Posterior vena cava (tissue), 2 donors: ENCODE measurements at regions of chr6 and their contacts with region 1.

Region 1: GRCh38 chr6:159862103-159862502 is 28.7 kb upstream of the MAS1 start:
- DNase-seq: no peak

Region 2: DNA sequence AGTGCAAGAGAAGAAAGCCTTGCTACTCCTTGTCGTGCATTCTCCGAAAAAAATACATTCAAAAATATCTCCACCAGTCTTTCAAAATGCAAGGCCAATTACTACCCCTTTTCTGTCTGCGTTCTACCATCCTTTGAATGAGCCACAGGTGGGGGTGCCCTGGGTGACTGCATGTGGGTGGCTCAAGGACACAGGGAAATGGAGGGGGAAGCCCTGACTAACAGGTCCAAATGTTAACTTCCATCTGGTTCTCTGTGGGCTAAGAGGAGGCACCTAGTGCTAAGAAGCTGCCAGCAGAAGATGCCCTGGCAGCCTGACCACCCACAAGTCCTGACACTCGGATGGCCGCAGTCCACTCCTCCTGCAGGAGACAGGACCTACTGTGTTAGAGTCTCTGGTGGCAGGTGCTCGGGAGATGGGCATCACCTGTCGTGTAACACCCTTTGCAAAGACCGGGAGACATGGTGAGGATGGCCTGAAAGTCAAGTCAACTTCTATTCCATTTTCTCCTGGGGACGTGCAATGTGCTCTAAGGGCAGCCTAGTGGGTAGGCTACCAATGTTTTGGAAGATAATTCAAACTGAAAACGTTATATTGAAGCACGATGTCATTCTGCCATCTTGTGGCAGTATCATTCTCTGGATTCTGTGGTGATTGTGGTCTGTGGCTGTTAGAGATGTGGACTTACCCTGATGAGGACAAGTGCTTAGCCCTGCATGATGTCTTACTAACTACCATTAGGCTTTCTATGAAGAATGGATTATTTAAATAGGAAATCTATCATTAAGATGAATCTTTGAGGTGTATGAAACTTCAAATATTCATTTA is 79.4 kb after region 1 on chr6:
- intact Hi-C with region 1: loop called (anchors 2 to 5 kb)
- DNase-seq: no peak

Region 3: DNA sequence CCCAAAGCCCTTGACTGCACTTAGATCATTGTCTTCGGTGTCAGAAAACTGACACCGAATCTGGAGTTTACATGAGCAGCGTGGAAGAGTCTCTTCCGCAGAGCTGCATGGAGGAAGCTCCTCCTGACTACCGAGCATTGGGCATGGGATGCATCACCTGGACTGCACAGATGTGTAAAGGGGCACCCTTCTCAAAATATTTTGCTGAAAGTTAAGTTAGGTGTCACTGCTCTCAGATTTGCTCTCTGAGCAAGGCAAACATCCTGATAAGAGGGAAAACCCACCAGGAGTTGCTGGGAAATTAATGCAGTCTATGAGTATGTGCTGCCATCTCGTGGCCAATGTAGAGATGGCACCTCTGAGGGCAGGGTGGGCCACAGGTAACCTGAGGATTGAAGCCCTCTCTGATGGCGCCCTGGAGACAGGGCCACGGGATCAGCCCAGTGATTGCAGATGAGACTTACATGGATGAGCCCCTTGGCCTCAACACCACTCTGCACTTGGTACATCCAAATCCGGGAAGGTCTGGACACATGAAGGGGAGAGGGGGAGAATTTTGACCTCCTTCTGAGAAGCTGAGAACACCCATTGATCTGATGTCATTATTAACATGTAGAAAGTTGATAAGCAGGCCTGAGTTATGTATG is 672.1 kb after region 1 on chr6:
- intact Hi-C with region 1: loop called in 1 of 2 experiments (anchors 5 kb)
- DNase-seq: no peak